Transverse colon (tissue), 4 donors: ENCODE measurements at regions of chr12 and their contacts with region 1.

Region 1: DNA sequence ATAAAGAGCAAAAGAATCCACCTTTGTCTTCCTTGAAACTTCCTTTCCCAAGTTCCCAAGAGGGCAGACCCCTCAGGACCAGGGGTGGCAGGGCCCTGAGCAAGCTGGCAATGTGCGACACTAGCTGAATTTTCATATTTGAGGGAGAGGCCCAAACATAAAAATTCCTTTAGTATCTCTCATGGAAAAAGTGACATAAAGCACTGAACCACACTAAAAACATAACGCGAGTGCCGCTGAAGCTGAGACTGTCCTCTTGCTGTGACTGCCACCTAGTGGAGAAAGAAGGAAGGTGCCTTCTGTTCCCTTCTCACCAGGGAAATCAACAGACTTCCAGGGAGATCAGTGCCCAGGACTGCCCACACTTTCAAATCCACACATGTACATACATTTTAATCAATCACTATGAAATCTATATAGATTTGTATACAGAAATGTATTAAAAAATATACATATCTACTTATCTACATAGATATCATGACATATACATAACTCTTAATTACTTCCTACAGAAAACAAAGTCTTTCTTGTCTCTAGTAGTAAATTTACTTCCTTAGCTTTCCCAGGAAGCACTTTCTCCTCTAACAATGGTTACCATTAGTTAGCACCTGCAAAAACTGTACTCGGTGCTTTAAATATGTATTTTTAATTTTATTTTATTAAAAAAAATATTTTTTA is 53.8 kb downstream of the SSH1 start:
- DNase-seq: peak; percentile 82
- H3K4me3 ChIP-seq: no peak overlapping the region
- H3K27ac ChIP-seq: peak overlapping the region; percentile 80 to 93 (median 88)
- H3K4me1 ChIP-seq: peaks cover 15 to 63% (median 37%) of the 10 kb centered on the region in 4 donors
- H3K27me3 ChIP-seq: no peaks in the 10 kb centered on the region
- CTCF ChIP-seq: peak; percentile 92 to 97 (median 96)
- EP300 ChIP-seq: peak; percentile 38
- POLR2A ChIP-seq: no peak

Region 2: DNA sequence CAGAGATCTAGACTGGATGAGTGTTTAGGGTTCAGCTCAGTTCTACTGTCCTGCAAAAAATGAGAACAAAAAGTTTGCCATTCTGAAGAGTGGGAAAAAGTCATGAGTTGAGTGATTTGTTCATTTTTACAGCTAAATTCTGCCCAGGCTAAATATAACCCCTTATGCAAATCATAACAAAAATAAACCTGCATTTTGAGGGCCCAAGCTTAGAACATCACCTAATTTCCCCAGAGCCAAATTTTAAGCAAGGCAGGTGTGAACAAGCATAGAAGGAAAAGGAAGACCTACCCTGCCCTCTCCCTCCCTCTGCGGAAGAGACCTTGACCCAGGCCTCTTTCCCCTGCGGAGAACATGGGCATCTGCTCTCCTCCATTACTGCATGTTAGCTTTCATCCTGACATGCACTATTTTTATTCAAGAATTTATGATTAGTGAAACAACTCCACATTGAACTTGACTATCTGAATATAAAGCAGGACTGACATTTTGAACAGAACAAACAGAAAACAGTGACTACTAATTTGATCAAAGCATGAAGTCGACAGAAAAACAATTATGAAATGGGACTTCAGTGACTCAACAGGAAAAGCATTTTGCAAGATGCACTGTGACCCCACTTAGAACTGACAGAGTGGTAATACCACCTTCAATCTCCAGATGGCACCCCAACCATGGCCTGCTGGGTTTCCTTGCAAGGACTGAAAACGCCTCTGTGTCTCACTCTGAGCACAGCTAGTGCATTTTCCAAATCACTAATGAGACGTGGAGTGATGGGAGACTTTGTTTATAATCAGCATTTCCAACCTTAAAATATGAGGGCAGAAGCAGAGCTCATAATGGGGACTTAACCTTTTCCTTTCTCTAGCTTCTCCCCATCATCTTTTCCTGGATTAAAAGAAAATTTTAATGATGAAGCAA is 139.0 kb before region 1 on chr12:
- in situ Hi-C with region 1: loop called (anchors 5 to 10 kb)
- intact Hi-C with region 1: loop called (anchors 1 kb)
- DNase-seq: peak; percentile 89
- H3K4me3 ChIP-seq: no peak overlapping the region
- H3K27ac ChIP-seq: peak overlapping the region; percentile 82 to 93 (median 88)
- H3K4me1 ChIP-seq: peaks cover 26 to 62% (median 50%) of the 10 kb centered on the region in 4 donors
- H3K27me3 ChIP-seq: no peaks in the 10 kb centered on the region
- CTCF ChIP-seq: peak; percentile 82 to 98 (median 90)
- EP300 ChIP-seq: no peak
- POLR2A ChIP-seq: no peak

Region 3: GRCh38 chr12:108856428-108857157 is 53.0 kb after region 1 on chr12:
- in situ Hi-C with region 1: no loop called
- intact Hi-C with region 1: loop called (anchors 10 kb)
- DNase-seq: peak; percentile 81
- H3K4me3 ChIP-seq: peak overlapping the region; percentile 62 to 85 (median 68)
- H3K27ac ChIP-seq: peak overlapping the region; percentile 87 to 94 (median 93)
- H3K4me1 ChIP-seq: peaks cover 8 to 64% (median 42%) of the 10 kb centered on the region in 4 donors
- H3K27me3 ChIP-seq: no peaks in the 10 kb centered on the region
- CTCF ChIP-seq: peak in 1 of 5 experiments; percentile 10
- EP300 ChIP-seq: no peak
- POLR2A ChIP-seq: peak; percentile 74